Activated CD4-positive, alpha-beta T cell treated with anti-CD3 and anti-CD28 coated beads for 36 hours (primary cell): ENCODE measurements at regions of chr12 and their contacts with region 1.

Region 1: GRCh38 chr12:56041552-56042429 is at the start of gene RPS26:
- DNase-seq: peak; percentile 97
- ATAC-seq: peak; percentile 92
- H3K4me3 Mint-ChIP-seq: peak within 1 kb of the TSS; percentile 91
- H3K27ac Mint-ChIP-seq: peak within 1 kb of the TSS; percentile 99
- H3K4me1 Mint-ChIP-seq: peaks cover 61% of the 10 kb centered on the region
- H3K27me3 Mint-ChIP-seq: no peaks in the 10 kb centered on the region
- total RNA-seq, gene RPS26: 33.9 to 64.0 TPM

Region 2: GRCh38 chr12:55607821-55608594 is 433.8 kb before region 1 on chr12:
- CTCF ChIA-PET with region 1: no interaction called
- POLR2A ChIA-PET with region 1: no interaction called
- intact Hi-C with region 1: no loop called
- DNase-seq: no peak
- ATAC-seq: no peak
- H3K4me3 Mint-ChIP-seq: no peak overlapping the region
- H3K27ac Mint-ChIP-seq: no peak overlapping the region
- H3K4me1 Mint-ChIP-seq: peaks cover 13% of the 10 kb centered on the region
- H3K27me3 Mint-ChIP-seq: peaks cover 19% of the 10 kb centered on the region

Region 3: DNA sequence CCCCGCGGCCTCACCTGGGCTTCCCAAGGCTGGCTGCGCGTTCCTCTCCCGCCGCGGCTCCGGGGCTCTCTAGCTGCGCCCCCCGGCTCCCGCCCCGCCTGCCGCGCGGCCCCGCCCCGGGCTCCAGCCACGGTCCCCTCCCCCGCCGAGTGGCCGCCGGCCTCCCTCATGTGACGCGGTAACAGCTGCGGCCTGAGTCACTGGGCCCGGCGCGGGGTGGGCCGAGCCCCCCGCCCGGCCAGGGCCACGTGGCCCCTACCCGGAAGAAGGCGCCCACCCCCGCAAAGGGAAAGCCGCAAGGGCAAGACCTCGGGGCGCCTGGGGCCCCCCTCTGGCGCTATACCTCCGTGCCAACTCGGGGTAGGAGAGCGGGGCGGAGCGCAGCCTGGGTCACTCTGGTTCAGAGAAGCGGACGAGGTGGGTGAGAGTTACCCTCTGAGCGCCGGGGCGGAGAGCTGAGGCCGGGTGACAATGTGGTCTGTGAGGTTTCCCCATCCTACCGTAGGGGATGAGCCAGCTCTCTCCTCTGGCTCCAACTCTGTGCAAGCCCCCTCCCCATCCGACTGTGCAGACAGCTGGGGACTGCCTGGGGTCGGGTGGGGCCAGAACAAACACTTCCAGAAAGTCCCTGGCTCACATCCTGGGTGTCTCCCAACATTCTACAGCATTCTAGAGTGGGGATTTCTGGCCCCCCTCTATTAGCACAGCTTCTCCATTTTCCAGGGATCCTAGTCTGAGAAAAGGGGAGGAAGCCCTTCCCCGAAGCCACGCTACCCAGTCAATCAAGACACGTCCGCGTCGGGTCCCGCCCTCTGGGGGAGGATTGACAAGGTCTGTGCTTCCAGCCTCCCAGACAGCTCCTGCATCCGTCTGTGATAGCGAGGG is 312.6 kb before region 1 on chr12 and contains the start of gene CD63:
- CTCF ChIA-PET with region 1: interaction called, 4 read pairs
- POLR2A ChIA-PET with region 1: interaction called, 3 read pairs
- intact Hi-C with region 1: loop called in 1 of 2 experiments (anchors 2 kb)
- DNase-seq: peak; percentile 89
- ATAC-seq: peak; percentile 73
- H3K4me3 Mint-ChIP-seq: peak within 1 kb of the TSS; percentile 93
- H3K27ac Mint-ChIP-seq: peak within 1 kb of the TSS; percentile 95
- H3K4me1 Mint-ChIP-seq: peaks cover 34% of the 10 kb centered on the region
- H3K27me3 Mint-ChIP-seq: no peaks in the 10 kb centered on the region
- total RNA-seq, gene CD63: 113 to 122 TPM

Region 4: DNA sequence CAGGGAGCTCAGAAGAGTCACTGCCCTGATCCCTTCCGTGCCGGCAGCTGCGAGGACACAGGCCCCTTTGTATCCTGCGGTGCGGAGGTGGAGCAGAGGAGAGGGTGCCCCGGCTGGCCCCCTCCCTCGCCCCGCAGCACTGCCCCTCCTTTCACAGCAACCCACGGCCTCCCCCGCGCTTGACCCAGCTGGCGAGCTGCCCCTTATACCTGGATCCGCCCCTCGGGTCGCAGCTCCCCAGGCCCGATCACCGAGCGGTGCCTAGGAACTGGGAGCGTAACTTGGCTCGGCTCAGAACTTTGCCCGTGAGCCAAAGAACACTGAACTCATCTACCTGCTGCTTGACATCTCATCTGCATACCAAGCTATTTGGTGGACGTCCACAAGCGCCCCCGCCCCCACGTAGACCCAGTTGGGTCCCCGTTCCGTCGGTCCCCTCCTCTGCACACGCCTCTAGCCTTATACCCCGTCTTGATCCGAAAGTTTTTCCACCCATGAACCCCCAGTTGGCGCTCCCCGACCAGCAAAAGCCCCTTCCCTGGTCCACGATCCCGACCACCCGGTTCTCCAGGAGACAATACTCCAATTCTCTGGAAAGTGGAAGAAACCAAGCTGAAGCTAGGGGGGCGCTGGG is 211.7 kb before region 1 on chr12:
- CTCF ChIA-PET with region 1: interaction called, 5 read pairs
- POLR2A ChIA-PET with region 1: no interaction called
- intact Hi-C with region 1: loop called in 1 of 2 experiments (anchors 1 kb)
- DNase-seq: peak; percentile 52
- ATAC-seq: peak; percentile 37
- H3K4me3 Mint-ChIP-seq: peak overlapping the region; percentile 99
- H3K27ac Mint-ChIP-seq: peak overlapping the region; percentile 97
- H3K4me1 Mint-ChIP-seq: peaks cover 46% of the 10 kb centered on the region
- H3K27me3 Mint-ChIP-seq: no peaks in the 10 kb centered on the region

Region 5: GRCh38 chr12:55996715-55997534 is 44.9 kb before region 1 on chr12 and contains the start of gene SUOX:
- CTCF ChIA-PET with region 1: interaction called, 49 read pairs
- POLR2A ChIA-PET with region 1: interaction called, 4 read pairs
- intact Hi-C with region 1: loop called (anchors 1 kb)
- DNase-seq: peak; percentile 65
- ATAC-seq: peak; percentile 87
- H3K4me3 Mint-ChIP-seq: peak within 1 kb of the TSS; percentile 56
- H3K27ac Mint-ChIP-seq: peak within 1 kb of the TSS; percentile 37
- H3K4me1 Mint-ChIP-seq: peaks cover 20% of the 10 kb centered on the region
- H3K27me3 Mint-ChIP-seq: peaks cover 3% of the 10 kb centered on the region
- total RNA-seq, gene SUOX: 2.9 to 3.4 TPM

Region 6: DNA sequence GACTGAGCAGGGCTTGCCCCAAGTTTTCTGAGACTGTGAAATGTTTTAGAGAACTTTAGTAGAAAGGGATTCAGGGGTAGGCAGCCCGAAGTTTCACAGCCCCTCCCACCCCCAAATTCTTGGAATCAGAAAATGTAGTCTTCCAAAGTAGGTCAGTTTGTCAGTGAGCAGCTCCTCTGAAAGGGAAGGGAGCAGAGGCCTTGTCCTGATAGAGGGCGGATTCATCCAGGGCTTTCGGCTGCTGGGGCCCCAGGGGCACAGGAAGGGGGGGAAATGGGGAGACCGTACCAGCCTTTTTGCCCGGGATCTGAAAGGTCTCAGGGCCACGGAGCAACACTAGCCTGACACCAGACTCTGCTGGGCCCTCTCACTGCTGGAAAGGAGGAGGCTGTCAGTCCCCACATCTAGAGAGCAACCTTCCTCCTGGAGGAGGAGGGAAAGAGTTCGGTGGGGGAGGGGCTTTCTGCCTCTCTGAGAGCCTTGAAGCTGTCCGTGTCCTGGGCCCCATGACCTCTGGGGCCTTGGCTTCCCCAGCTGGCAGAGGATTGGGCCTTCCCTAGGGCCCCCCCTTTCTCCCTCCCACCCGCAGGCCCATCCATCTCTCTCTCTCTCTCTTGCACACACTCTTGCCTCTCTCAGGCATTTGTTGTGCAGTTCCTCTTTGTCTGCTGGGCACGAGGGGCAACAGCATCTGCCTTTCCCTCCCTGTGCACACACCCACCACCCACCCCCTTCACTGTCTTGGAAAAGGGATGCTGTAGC is 21.2 kb before region 1 on chr12 and contains the start of gene IKZF4:
- CTCF ChIA-PET with region 1: interaction called, 7 read pairs
- POLR2A ChIA-PET with region 1: interaction called, 4 read pairs
- intact Hi-C with region 1: loop called (anchors 1 to 2 kb)
- DNase-seq: peak; percentile 60
- ATAC-seq: peak; percentile 48
- H3K4me3 Mint-ChIP-seq: peak within 1 kb of the TSS; percentile 80
- H3K27ac Mint-ChIP-seq: peak within 1 kb of the TSS; percentile 95
- H3K4me1 Mint-ChIP-seq: peaks cover 24% of the 10 kb centered on the region
- H3K27me3 Mint-ChIP-seq: no peaks in the 10 kb centered on the region
- total RNA-seq, gene IKZF4: 14.9 to 16.3 TPM

Region 7: DNA sequence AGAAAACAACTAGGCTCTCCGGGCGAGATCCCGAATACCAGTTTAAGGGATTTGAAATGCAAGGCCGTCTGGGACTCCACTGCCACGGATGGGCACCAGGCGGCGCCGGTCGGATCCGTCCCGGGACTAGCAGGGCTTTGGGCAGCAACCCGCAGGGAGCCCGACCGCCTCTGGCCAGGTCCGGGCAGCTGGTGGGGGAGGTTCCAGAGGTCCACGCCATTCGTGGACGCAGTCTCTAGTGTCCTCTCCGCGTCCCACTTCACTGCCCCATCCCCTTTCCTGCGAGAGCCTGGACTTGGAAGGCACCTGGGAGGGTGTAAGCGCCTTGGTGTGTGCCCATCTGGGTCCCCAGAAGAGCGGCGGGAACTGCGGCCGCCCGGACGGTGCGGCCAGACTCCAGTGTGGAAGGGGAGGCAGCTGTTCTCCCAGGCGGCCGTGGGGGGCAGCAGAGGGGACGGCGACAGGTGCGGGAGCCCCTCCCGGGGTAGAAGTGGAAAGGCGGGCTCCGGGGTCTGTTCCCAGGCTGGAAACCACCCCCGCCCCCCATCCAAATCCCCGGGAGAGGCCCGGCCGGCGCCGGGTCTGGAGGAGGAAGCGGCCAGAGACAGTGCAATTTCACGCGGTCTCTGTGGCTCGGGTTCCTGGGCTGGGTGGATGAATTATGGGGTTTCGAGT is 37.3 kb after region 1 on chr12:
- CTCF ChIA-PET with region 1: interaction called, 5 read pairs
- POLR2A ChIA-PET with region 1: interaction called, 8 read pairs
- intact Hi-C with region 1: loop called in 1 of 2 experiments (anchors 5 kb)
- DNase-seq: peak; percentile 76
- ATAC-seq: peak; percentile 42
- H3K4me3 Mint-ChIP-seq: peak overlapping the region; percentile 74
- H3K27ac Mint-ChIP-seq: no peak overlapping the region
- H3K4me1 Mint-ChIP-seq: peaks cover 8% of the 10 kb centered on the region
- H3K27me3 Mint-ChIP-seq: peaks cover 6% of the 10 kb centered on the region

Region 8: GRCh38 chr12:56189176-56189917 is 147.6 kb after region 1 on chr12 and contains the start of gene SMARCC2:
- CTCF ChIA-PET with region 1: interaction called, 5 read pairs
- POLR2A ChIA-PET with region 1: no interaction called
- intact Hi-C with region 1: loop called in 1 of 2 experiments (anchors 10 kb)
- DNase-seq: peak; percentile 94
- ATAC-seq: peak; percentile 82
- H3K4me3 Mint-ChIP-seq: peak within 1 kb of the TSS; percentile 82
- H3K27ac Mint-ChIP-seq: peak within 1 kb of the TSS; percentile 96
- H3K4me1 Mint-ChIP-seq: peaks cover 38% of the 10 kb centered on the region
- H3K27me3 Mint-ChIP-seq: no peaks in the 10 kb centered on the region
- total RNA-seq, gene SMARCC2: 96.9 to 123 TPM